Sciatic nerve (tissue), 2 donors: ENCODE measurements at regions of chr22 and their contacts with region 1.

Region 1: GRCh38 chr22:35484651-35485556 is 55.7 kb upstream of the RASD2 start:
- DNase-seq: no peak
- ATAC-seq: no peak

Region 2: DNA sequence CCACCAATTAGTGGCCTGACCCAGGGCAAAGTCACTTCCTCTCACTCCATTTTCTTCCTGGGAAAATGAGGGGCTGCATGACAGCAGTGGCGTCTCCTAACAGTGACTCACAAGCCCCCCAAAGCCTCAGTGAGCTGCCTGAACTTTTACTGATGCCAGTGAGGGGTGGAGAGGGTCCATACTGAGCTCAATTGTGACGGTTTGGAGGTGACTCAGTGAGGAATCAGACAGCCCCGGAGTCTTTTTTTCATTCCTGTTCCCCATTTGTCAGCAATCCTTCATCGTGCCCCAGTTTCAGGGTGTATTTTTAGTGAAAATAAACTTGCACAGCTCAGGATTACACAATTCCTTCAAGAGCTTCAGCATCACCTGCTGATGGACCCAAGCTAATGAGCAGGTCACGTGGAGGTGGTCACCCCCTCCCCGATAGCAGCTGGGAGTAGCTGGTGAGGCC is 25.6 kb after region 1 on chr22:
- intact Hi-C with region 1: loop called (anchors 1 kb)
- DNase-seq: no peak
- ATAC-seq: no peak